HEK293 (cell line): ENCODE measurements at regions of chrX and their contacts with region 1.

Region 1: DNA sequence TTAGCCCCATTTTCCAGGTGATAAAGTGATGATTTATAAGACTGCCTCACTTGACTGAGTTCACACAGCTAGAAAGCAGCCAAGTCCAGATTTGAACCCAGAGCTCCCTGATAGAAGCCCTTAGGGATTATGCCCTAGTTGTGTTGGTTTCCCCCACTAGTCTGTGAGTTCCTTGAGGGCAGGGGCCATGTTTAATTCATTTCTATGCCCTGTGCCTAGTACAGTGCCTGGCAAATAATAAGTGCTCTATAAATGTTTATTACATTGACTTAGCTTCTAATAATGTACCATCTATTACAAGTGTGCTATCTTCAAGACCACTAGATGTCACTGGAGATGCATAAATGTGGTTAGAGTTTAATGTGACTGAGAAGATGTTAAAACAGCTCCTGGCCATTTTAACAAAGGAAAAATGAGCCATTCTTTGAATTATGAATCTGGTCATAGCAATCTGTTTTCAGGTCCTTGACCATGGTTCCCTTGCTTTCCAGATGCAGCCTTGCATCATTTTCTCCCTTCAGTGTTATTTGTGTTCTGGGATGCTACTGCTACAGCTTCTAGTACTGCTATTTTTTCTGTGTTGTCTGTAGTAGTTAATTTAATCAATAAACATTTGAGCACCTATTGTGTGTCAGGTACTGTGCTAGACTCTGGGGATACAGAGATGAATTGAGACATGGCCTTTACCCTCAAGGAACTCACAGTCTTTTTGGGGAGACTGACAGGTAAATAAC is 43.2 kb downstream of the SLC9A6 start:
- H3K4me3 ChIP-seq: no peak overlapping the region
- H3K27ac ChIP-seq: no peak overlapping the region
- H3K4me1 ChIP-seq: peaks cover 8% of the 10 kb centered on the region; the same call in 1 of the 2 replicates
- CTCF ChIP-seq: peak; percentile 63; the same call in 1 of the 2 replicates

Region 2: GRCh38 chrX:136162831-136163570 is 134.6 kb after region 1 on chrX:
- CTCF ChIA-PET with region 1: interaction called, 92 read pairs
- POLR2A ChIA-PET with region 1: interaction called, 16 read pairs
- H3K4me3 ChIP-seq: no peak overlapping the region
- H3K27ac ChIP-seq: no peak overlapping the region
- H3K4me1 ChIP-seq: peaks cover 2% of the 10 kb centered on the region
- CTCF ChIP-seq: peak; percentile 84

Region 3: DNA sequence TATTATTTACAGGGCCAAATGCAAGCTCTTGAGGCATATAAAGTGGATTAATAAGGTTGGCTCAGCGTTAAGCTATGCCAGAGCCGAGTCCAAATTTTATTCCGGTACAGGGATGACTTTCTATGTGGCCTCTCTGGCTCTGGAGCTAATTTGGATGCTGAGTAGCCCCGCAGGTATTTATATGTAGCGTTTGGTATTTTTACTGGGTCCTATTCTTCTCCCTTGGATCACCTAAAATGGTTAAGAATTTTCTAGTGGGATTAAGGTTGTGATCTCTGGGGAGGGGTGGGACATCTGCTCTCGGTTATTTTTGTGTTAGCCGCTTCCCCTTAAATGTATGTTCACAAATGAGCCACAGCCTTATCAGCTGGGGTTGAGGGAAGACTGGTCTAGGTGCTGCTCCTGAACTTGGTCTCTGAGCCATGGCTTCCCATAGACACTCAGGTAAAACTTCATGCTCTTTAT is 168.3 kb after region 1 on chrX:
- CTCF ChIA-PET with region 1: interaction called, 18 read pairs
- POLR2A ChIA-PET with region 1: interaction called, 5 read pairs
- H3K4me3 ChIP-seq: no peak overlapping the region
- H3K27ac ChIP-seq: no peak overlapping the region
- H3K4me1 ChIP-seq: no peaks in the 10 kb centered on the region
- CTCF ChIP-seq: no peak

Region 4: DNA sequence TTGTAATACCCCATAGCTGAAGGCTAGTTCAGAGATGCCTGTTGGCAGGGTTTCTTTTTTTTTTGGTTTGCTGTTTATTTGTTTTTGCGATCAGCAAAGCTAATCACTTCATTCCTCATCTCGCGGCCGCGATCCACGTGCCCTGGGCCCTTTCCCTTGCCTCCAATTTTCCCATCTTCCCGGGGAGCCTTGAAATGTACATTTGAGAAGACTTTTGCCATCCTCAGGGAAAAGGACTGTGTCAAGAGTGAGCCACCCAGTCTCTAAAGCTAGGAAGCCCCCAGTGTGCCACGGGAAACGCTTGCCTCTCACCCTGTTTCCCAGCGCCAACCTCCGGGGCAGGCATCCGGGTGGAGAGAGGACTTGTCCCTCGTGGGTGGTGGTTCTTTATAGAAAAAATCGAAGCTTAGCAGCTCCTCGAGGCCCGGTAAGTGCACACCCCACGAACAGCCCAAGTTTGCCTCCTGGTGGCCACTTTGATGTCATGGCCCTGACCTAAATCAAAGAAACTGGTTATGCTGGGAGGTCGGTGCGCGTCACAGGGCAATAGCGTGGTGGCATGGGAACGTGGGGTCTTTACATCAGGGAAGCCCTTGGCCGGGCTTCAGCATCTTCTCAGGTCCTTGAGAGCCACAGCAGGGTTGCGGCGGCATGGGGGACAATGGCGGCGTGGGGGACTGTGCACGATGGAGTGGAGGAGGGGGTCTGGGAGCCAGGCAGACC is 180.8 kb after region 1 on chrX:
- CTCF ChIA-PET with region 1: interaction called, 51 read pairs
- POLR2A ChIA-PET with region 1: no interaction called
- H3K4me3 ChIP-seq: no peak overlapping the region
- H3K27ac ChIP-seq: no peak overlapping the region; the same call in 1 of the 2 replicates
- H3K4me1 ChIP-seq: 0 out of 2 replicates have a peak, but pooled peaks cover 3% of the 10 kb centered on the region
- CTCF ChIP-seq: peak; percentile 42; the same call in 1 of the 2 replicates

Region 5: GRCh38 chrX:136214551-136214950 is 186.1 kb after region 1 on chrX:
- CTCF ChIA-PET with region 1: interaction called, 51 read pairs
- POLR2A ChIA-PET with region 1: no interaction called
- H3K4me3 ChIP-seq: no peak overlapping the region
- H3K27ac ChIP-seq: no peak overlapping the region
- H3K4me1 ChIP-seq: no peaks in the 10 kb centered on the region
- CTCF ChIP-seq: no peak

Region 6: DNA sequence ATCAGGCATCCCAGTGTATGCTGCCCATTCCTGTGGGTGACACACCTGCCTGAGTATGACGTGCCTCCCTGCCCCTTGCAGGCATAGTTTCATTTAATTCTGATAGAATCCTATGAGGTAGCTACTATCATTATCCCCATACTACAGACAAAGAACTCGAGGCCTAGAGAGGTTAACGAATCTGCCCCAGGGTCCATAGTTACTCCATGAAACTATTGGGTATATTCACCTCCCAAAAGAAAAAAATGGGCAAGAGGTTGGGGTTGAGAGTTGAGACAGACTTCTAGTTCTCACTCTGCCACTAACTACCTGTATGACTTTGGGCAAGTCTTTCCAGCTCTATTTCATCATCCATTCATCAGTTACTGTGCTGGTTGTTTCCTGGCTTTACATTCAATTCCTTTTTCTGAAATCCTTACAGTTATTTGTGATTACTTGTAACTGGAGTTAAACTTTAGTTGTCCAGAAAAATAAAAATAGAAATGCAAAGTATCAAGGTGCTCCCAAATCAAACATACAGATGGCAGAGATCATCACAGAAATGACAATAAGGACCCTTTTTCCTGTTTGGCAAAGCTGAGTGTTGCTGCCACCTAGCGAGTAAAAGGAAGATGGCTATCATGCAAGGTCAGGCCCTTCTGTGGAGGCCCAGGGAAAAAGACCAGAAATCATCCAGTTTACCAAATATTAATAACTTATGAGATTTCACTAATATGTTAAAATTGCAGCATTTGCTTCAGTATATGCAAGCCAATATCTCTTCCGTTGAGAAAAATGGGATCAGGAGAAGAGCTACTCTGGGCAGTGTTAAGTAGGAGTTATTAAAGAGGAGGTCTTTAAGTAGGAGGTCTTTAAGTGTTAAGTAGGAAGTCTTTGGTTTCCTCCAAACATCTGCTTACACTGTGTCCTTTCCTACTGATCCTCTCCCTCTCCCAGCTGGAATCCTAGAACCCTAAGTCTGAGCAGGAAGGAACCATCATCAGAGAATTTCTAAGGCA is 239.9 kb after region 1 on chrX:
- CTCF ChIA-PET with region 1: interaction called, 96 read pairs
- POLR2A ChIA-PET with region 1: interaction called, 4 read pairs
- H3K4me3 ChIP-seq: no peak overlapping the region
- H3K27ac ChIP-seq: no peak overlapping the region
- H3K4me1 ChIP-seq: 0 out of 2 replicates have a peak, but pooled peaks cover 3% of the 10 kb centered on the region
- CTCF ChIP-seq: peak; percentile 53; the same call in 1 of the 2 replicates

Region 7: DNA sequence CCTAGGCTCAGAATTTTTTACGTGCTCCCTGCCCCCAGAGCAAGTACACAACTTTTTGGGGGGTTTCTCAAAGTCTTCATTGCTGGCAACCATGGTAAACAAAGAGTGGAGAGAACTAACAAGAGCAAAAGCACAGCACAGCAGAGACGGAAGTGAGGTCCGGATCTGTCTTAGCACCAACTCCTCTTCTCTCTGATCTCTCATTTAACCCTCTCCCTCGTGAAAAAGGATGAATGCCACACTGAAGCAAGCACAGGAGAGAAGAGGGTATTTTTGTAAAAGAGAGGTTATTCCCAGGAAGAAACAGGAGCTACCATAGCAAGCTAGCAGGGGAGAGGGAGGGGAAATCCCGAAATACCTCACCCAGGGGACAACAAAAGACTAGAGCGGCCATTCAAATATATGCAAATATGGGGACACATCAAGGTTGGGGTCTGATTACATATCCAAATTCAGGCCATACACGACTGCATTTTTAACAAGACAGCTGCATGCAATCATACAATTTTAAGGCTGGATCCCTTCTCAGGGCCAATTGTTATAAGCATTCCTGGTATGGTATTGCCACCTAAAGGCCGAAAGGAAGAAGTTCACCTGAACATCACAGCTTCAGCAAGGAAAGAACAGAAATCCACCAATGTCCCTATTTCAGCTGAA is 666.1 kb after region 1 on chrX:
- CTCF ChIA-PET with region 1: interaction called, 22 read pairs
- POLR2A ChIA-PET with region 1: no interaction called
- H3K4me3 ChIP-seq: no peak overlapping the region
- H3K27ac ChIP-seq: no peak overlapping the region
- H3K4me1 ChIP-seq: no peaks in the 10 kb centered on the region
- CTCF ChIP-seq: peak; percentile 62; the same call in 1 of the 2 replicates